Tibial artery (tissue), 4 donors: ENCODE measurements at regions of chrX and their contacts with region 1.

Region 1: GRCh38 chrX:74133156-74133796 is 170.7 kb upstream of the ZCCHC13 start:
- DNase-seq: no peak
- H3K4me3 ChIP-seq: no peak overlapping the region
- H3K27ac ChIP-seq: no peak overlapping the region
- H3K4me1 ChIP-seq: no peaks in the 10 kb centered on the region
- H3K27me3 ChIP-seq: no peaks in the 10 kb centered on the region
- CTCF ChIP-seq: peak; percentile 52 to 63

Region 2: DNA sequence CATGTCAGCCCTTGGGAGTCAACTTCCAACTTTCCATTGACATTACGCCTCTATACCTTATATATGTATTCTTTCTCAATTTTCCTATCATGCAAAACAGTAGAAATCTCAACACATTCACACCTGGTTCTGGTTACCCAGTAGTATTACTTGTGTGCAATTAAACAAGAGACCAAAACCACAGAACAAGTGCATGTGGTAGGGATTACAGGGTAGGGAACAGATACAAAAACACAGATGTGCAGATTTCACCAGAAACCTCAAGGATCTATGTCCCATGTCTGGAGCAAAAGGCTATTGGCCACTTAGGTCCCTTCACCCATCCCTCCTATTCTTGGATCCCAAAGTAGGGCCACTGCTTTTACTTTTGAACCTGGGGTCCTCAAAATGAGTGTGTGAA is 27.1 kb after region 1 on chrX:
- intact Hi-C with region 1: loop called (anchors 1 kb)
- DNase-seq: no peak
- H3K4me3 ChIP-seq: no peak overlapping the region
- H3K27ac ChIP-seq: no peak overlapping the region
- H3K4me1 ChIP-seq: peaks cover 0 to 3% (median 0%) of the 10 kb centered on the region in 4 donors
- H3K27me3 ChIP-seq: no peaks in the 10 kb centered on the region
- CTCF ChIP-seq: no peak

Region 3: GRCh38 chrX:74187211-74187610 is 53.9 kb after region 1 on chrX:
- intact Hi-C with region 1: no loop called
- DNase-seq: no peak
- H3K4me3 ChIP-seq: no peak overlapping the region
- H3K27ac ChIP-seq: no peak overlapping the region
- H3K4me1 ChIP-seq: no peaks in the 10 kb centered on the region
- H3K27me3 ChIP-seq: no peaks in the 10 kb centered on the region
- CTCF ChIP-seq: no peak